Esophagus muscularis mucosa (tissue), 4 donors: ENCODE measurements at regions of chr1 and their contacts with region 1.

Region 1: GRCh38 chr1:234499119-234499942 is 20.4 kb upstream of the TARBP1 start:
- DNase-seq: peak; percentile 98
- H3K4me3 ChIP-seq: peak overlapping the region; percentile 28 to 46 (median 35)
- H3K27ac ChIP-seq: peak overlapping the region; percentile 85 to 90 (median 87)
- H3K4me1 ChIP-seq: peaks cover 15 to 55% (median 49%) of the 10 kb centered on the region in 4 donors
- H3K27me3 ChIP-seq: no peaks in the 10 kb centered on the region
- CTCF ChIP-seq: peak; percentile 94 to 98 (median 97)
- EP300 ChIP-seq: no peak
- POLR2A ChIP-seq: no peak

Region 2: DNA sequence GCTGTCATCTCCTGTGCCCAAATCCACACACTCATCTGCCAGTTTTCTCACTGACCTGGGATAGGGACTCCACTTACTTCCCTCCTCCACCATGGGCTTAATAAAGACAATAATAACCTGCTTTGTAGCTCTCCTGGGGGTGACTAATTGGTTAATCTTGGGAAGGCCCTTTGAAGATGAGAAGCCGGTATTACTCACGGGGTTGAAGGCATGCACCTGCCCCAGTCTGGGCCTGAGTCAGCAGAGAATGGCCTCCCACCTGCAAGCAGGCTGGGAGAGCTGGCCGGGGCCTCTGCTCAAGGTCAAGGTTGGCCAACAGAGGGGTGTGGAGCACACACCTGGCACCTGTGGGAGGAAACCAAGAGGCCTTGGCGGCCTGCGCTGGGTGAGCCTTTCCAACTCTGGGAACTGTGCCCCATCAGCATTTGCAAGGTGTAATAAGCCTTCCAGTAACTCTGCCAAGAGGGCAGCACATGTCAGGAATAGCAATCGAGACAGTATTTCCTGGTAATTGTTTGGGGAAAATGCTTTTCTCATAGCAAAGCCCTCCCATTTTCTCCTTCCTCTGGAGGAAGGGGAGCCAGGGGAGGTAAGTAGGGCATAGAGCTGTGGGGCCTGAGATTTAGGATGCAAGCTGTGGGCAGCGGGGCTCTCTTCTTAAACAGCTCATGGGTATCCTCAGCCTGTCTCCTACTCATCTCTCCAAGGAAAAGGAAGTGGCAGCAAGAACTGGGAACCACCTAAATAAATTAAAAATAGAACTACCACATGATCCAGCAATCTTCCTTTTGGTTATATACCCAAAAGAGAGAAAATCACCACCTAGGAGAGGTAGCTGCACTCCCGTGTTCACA is 580.3 kb after region 1 on chr1:
- intact Hi-C with region 1: loop called (anchors 2 kb)
- DNase-seq: no peak
- H3K4me3 ChIP-seq: no peak overlapping the region
- H3K27ac ChIP-seq: peak overlapping the region; percentile 49 to 89 (median 84)
- H3K4me1 ChIP-seq: peaks cover 56 to 78% (median 75%) of the 10 kb centered on the region in 4 donors
- H3K27me3 ChIP-seq: no peaks in the 10 kb centered on the region
- CTCF ChIP-seq: no peak
- EP300 ChIP-seq: no peak
- POLR2A ChIP-seq: no peak